Activated T-helper 1 cell treated with anti-CD3 and anti-CD28 coated beads, Interleukin-12 subunit alpha, Interleukin-12 subunit beta, Interleukin-2, Interleukin-4 antibody, amounts not matched to agents 30 ng/mL and 10 ng/mL and 1 ng/mL, durations not matched to agents 14 hours and 24 hours and 36 hours (primary cell): ENCODE measurements at regions of chr2 and their contacts with region 1.

Region 1: DNA sequence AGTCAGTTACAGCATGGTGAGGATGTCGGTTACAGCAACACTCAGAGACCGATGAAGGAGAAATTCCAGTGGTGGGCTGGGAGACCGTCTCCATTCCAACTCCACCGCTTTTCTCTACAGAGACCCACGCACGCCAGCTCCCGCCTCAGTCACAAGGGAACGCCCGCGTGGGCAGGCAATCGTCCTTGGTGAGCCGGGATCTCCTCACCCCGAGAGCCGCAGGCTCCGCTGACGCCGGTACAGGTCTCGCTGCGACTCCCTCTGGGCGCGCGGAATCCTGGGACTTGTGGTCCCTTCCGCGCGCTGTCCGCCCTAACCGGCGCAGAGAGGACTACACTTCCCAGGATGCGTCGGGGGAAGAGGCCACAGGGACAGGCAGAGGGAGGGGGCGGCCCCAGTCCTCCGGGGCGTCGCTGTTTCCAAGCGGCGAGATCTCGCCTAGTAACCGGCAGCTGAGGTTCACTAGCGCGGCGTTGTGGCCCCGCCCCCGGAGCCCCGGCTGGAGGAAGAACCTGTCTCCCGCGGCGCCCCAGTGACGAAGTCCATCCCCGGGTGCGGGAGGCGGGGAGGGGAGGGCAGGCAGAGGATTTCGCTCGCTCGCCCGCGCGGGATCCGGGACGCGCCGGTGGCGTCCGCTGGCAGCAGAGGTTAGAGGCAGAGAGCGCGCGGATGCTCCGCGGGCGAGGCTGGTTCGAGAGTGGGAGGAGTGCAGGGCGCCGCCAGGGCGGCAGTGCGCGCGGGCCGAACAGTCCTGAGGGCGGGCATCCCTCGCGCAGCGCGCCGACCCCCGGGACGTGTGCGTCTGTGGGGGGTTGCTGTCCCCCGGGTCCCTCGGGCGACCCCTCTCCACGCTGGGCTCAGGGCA is at the start of gene EML6:
- DNase-seq: peak; percentile 99
- H3K4me3 Mint-ChIP-seq: peak within 1 kb of the TSS; percentile 87
- H3K27ac Mint-ChIP-seq: peak within 1 kb of the TSS; percentile 49
- H3K4me1 Mint-ChIP-seq: peaks cover 14% of the 10 kb centered on the region
- H3K27me3 Mint-ChIP-seq: peaks cover 71% of the 10 kb centered on the region
- total RNA-seq, gene EML6: 0.37 and 0.44 TPM in 2 replicates

Region 2: DNA sequence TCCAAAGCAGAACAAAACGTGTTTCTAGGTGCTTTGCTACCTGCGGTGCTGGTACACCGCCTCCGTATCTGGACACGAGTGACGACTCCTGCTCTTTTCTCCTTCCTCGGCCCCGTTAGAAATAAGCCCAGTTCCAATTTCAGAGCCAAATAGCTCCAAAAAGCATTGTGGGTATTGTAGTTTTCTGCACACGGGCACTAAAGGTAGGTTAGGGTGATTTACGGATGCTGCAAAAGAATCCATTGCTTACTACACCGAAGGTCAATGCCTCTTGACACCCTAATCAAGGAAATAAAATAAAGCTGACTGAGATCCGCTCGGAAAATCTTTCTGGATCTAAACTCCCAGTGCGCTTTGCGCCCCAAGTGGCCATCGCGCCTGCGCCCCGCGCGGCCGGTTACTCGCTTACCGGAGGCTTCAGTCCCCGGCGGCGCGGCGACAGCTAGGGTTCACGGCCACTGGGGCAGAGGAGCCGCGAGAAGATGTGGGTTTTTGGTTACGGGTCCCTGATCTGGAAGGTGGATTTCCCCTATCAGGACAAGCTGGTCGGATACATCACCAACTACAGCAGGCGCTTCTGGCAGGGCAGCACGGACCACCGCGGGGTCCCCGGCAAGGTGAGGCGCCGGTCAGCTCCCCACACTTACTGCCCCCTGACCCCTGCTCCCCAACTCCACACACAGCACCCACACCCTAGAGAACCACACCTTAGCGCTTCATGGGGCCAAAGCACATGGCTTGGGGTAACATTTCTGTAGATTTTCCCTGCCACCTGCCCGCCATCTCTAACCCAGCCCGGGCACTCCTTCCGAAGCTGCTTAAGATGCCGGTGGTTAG is 955.7 kb before region 1 on chr2 and contains the start of gene CHAC2:
- intact Hi-C with region 1: loop called (anchors 2 kb)
- DNase-seq: peak; percentile 82
- H3K4me3 Mint-ChIP-seq: peak within 1 kb of the TSS; percentile 96
- H3K27ac Mint-ChIP-seq: peak within 1 kb of the TSS; percentile 97
- H3K4me1 Mint-ChIP-seq: peaks cover 38% of the 10 kb centered on the region
- H3K27me3 Mint-ChIP-seq: no peaks in the 10 kb centered on the region
- total RNA-seq, gene CHAC2: 24.1 and 25.6 TPM in 2 replicates

Region 3: GRCh38 chr2:54330162-54330925 is 393.0 kb before region 1 on chr2:
- intact Hi-C with region 1: loop called (anchors 1 kb)
- DNase-seq: peak; percentile 86
- H3K4me3 Mint-ChIP-seq: peak overlapping the region; percentile 81
- H3K27ac Mint-ChIP-seq: peak overlapping the region; percentile 69
- H3K4me1 Mint-ChIP-seq: peaks cover 17% of the 10 kb centered on the region
- H3K27me3 Mint-ChIP-seq: peaks cover 19% of the 10 kb centered on the region

Region 4: GRCh38 chr2:54673501-54673998 is 49.8 kb before region 1 on chr2:
- intact Hi-C with region 1: loop called (anchors 2 kb)
- DNase-seq: peak; percentile 32
- H3K4me3 Mint-ChIP-seq: peak overlapping the region; percentile 43
- H3K27ac Mint-ChIP-seq: peak overlapping the region; percentile 73
- H3K4me1 Mint-ChIP-seq: peaks cover 48% of the 10 kb centered on the region
- H3K27me3 Mint-ChIP-seq: peaks cover 25% of the 10 kb centered on the region

Region 5: DNA sequence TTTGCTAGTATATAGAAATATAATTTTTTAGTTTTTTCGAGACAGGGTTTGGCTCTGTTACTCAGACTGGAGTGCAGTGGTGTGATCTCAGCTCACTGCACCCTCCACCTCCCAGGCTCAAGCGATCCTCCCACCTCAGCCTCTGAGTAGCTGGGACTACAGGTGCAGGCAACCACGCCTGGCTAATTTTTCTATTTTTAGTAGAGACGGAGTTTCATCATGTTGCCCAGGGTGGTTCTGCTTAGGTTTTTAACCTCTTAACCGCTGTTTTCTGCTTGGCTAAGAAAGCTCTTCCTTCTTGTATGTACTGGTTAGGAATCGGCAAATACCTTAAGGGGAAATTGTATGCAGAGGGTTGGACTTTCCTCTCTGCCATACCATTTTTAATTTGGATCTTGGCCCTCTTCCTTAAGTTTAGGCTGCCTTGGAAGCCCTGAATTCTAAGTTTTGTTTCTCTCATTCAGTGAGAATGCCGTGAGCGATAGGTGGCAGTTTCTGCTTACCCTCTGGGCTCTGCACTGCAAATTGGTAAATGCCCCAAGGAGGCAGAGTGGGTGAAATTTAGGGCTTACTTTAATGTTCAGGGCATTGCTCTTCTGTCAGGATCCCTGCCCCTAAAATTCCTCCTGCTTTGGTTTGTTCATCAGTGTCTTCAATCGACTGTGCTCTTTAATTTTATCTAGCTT is 32.4 kb after region 1 on chr2:
- intact Hi-C with region 1: no loop called
- DNase-seq: no peak
- H3K4me3 Mint-ChIP-seq: no peak overlapping the region
- H3K27ac Mint-ChIP-seq: no peak overlapping the region
- H3K4me1 Mint-ChIP-seq: no peaks in the 10 kb centered on the region
- H3K27me3 Mint-ChIP-seq: peaks cover 9% of the 10 kb centered on the region

Region 6: GRCh38 chr2:54838585-54839035 is 115.2 kb after region 1 on chr2:
- intact Hi-C with region 1: loop called (anchors 1 kb)
- DNase-seq: peak; percentile 28
- H3K4me3 Mint-ChIP-seq: no peak overlapping the region
- H3K27ac Mint-ChIP-seq: no peak overlapping the region
- H3K4me1 Mint-ChIP-seq: no peaks in the 10 kb centered on the region
- H3K27me3 Mint-ChIP-seq: no peaks in the 10 kb centered on the region

Region 7: GRCh38 chr2:55133467-55134315 is 410.3 kb after region 1 on chr2:
- intact Hi-C with region 1: loop called (anchors 5 kb)
- DNase-seq: peak; percentile 58
- H3K4me3 Mint-ChIP-seq: peak overlapping the region; percentile 82
- H3K27ac Mint-ChIP-seq: peak overlapping the region; percentile 97
- H3K4me1 Mint-ChIP-seq: peaks cover 31% of the 10 kb centered on the region
- H3K27me3 Mint-ChIP-seq: no peaks in the 10 kb centered on the region

Region 8: DNA sequence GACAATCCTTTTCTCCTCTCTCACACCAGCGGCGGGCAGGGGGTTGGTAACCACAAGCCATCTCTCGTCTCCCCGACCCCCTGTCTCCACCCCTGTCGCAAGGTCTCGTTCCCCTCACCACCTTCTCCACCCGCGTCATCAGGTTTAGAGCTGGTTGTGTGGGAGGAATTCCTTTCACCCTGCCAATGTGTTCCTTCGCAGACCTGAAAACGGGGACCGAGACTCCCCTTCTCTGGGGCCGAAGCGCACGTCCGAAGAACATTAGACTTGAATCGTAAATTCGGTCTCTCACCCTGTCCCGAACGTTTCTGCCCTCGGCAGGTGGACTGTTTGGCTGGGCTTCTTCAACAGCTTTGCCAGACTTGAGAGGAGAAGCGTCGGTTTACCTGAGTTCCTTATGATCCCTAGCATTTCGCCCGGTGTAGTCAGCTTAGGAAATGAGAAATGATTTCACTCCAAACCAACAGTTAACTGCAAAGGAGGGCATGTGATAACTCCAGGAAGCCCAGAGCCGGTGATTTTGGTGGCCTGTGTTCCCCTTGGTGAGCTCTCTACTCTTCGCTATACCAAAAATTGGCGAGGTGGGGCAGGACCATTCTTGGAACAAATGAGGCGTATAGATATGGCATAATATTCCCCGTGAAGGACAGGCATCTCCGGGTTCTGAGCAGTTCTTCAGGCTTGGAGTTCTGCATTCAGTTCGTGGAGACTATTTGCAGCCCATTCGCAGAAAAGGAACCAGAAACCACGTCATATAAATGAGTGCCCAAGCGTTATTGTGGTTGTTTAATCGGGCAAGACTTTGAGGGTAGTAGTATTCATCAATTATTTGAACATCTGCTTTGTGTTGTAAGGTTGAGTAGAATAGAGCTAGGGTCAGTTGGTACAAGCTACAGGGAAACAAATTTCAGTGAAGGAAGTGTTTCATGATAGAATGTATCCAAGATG is 796.8 kb after region 1 on chr2:
- intact Hi-C with region 1: loop called (anchors 1 kb)
- DNase-seq: peak; percentile 15
- H3K4me3 Mint-ChIP-seq: peak overlapping the region; percentile 97
- H3K27ac Mint-ChIP-seq: peak overlapping the region; percentile 95
- H3K4me1 Mint-ChIP-seq: peaks cover 17% of the 10 kb centered on the region
- H3K27me3 Mint-ChIP-seq: no peaks in the 10 kb centered on the region